Calu3 (cell line): ENCODE measurements at regions of chr3 and their contacts with region 1.

Region 1: GRCh38 chr3:189947948-189948723 is 172.6 kb downstream of the P3H2 start:
- DNase-seq: peak; percentile 63
- H3K4me3 Mint-ChIP-seq: no peak overlapping the region
- H3K27ac Mint-ChIP-seq: peak overlapping the region; percentile 23
- H3K4me1 Mint-ChIP-seq: peaks cover 53% of the 10 kb centered on the region
- H3K27me3 Mint-ChIP-seq: no peaks in the 10 kb centered on the region
- CTCF ChIP-seq: peak; percentile 71

Region 2: DNA sequence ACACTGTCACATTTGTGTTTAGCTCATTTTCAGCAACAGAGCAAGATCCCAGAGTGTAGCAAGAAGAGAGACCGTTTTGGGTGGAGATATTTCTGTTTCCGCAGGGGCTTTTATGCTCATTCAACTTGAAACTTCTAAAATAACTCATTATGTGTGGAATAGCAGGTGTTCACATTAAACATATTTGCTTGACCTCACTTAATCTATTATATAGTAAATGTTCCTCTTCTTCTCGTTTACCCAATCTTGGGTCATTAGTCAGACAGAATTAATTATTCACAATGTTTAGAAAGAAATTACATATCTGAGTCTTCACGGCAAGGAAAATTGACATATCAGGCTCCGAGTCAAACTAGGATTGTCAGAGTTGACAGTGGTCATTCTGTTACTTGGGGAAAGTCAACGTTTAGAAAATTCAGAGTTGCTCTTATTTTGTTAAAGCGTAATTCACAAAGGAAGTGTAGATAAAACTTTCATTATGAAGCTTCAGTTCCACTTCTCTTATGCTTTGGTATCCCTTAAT is 553.5 kb before region 1 on chr3:
- CTCF ChIA-PET with region 1: no interaction called
- intact Hi-C with region 1: loop called (anchors 2 kb)
- DNase-seq: no peak
- H3K4me3 Mint-ChIP-seq: no peak overlapping the region
- H3K27ac Mint-ChIP-seq: peak overlapping the region; percentile 47
- H3K4me1 Mint-ChIP-seq: peaks cover 52% of the 10 kb centered on the region
- H3K27me3 Mint-ChIP-seq: no peaks in the 10 kb centered on the region
- CTCF ChIP-seq: no peak

Region 3: GRCh38 chr3:189512039-189512438 is 436.1 kb before region 1 on chr3:
- CTCF ChIA-PET with region 1: interaction called, 6 read pairs
- intact Hi-C with region 1: loop called (anchors 2 kb)
- DNase-seq: no peak
- H3K4me3 Mint-ChIP-seq: no peak overlapping the region
- H3K27ac Mint-ChIP-seq: peak overlapping the region; percentile 62
- H3K4me1 Mint-ChIP-seq: peaks cover 25% of the 10 kb centered on the region
- H3K27me3 Mint-ChIP-seq: no peaks in the 10 kb centered on the region
- CTCF ChIP-seq: no peak

Region 4: GRCh38 chr3:189570916-189571315 is 377.2 kb before region 1 on chr3:
- CTCF ChIA-PET with region 1: interaction called, 3 read pairs
- intact Hi-C with region 1: loop called (anchors 10 kb)
- DNase-seq: no peak
- H3K4me3 Mint-ChIP-seq: no peak overlapping the region
- H3K27ac Mint-ChIP-seq: no peak overlapping the region
- H3K4me1 Mint-ChIP-seq: peaks cover 15% of the 10 kb centered on the region
- H3K27me3 Mint-ChIP-seq: no peaks in the 10 kb centered on the region
- CTCF ChIP-seq: no peak

Region 5: DNA sequence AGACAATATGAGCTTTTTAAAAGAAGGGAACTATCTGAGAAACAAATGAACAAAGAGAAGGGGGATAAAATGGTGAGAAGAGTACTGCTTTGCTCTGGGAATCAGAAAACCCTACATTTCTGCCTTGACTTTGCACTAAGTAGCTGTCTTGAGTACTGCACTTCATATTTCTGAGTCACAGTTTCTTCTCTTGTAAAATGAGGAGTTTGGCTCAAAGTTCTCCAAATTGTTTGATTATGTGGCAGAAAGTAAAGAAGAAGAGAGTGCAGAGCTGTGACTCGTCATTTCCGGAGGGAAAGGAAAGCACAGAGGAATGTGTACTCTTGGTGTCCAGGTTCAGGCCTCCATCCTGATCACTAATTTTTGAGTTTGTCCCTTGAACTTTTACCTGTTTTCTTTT is 262.3 kb before region 1 on chr3:
- CTCF ChIA-PET with region 1: interaction called, 10 read pairs
- intact Hi-C with region 1: loop called (anchors 2 kb)
- DNase-seq: no peak
- H3K4me3 Mint-ChIP-seq: no peak overlapping the region
- H3K27ac Mint-ChIP-seq: no peak overlapping the region
- H3K4me1 Mint-ChIP-seq: no peaks in the 10 kb centered on the region
- H3K27me3 Mint-ChIP-seq: no peaks in the 10 kb centered on the region
- CTCF ChIP-seq: no peak

Region 6: DNA sequence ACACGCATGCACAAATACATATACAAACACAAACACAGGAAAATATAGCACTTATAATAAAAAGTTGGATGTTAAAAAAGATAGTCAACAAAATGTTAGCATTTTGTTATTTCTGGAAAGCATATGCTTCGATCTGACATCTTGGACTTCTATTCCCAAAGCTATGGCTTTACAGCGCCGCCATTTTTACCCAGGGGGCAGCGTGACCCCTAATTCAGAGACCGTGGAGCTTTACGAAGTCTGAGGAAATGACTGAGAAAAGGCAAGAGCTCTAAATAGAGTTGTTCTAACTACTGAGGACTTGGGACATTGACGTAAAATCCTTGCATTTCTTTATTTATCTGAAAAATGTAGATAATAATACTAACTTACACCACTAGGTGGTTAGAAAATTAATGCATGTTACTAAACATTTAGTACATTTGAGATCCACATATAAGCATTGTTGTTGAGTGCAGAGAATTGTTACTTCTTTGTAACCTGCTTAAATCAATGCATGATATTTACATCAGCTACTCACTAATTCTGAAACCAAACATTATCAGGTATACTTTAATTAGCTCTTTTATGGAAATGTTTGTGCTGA is 161.6 kb before region 1 on chr3:
- CTCF ChIA-PET with region 1: interaction called, 9 read pairs
- intact Hi-C with region 1: loop called (anchors 2 kb)
- DNase-seq: no peak
- H3K4me3 Mint-ChIP-seq: no peak overlapping the region
- H3K27ac Mint-ChIP-seq: no peak overlapping the region
- H3K4me1 Mint-ChIP-seq: peaks cover 24% of the 10 kb centered on the region
- H3K27me3 Mint-ChIP-seq: no peaks in the 10 kb centered on the region
- CTCF ChIP-seq: peak; percentile 47

Region 7: GRCh38 chr3:189841473-189842210 is 106.5 kb before region 1 on chr3:
- CTCF ChIA-PET with region 1: interaction called, 7 read pairs
- intact Hi-C with region 1: loop called (anchors 1 kb)
- DNase-seq: peak; percentile 68
- H3K4me3 Mint-ChIP-seq: peak overlapping the region; percentile 18
- H3K27ac Mint-ChIP-seq: peak overlapping the region; percentile 92
- H3K4me1 Mint-ChIP-seq: peaks cover 37% of the 10 kb centered on the region
- H3K27me3 Mint-ChIP-seq: no peaks in the 10 kb centered on the region
- CTCF ChIP-seq: no peak

Region 8: GRCh38 chr3:190073264-190074008 is 125.3 kb after region 1 on chr3:
- CTCF ChIA-PET with region 1: no interaction called
- intact Hi-C with region 1: no loop called
- DNase-seq: no peak
- H3K4me3 Mint-ChIP-seq: no peak overlapping the region
- H3K27ac Mint-ChIP-seq: no peak overlapping the region
- H3K4me1 Mint-ChIP-seq: peaks cover 20% of the 10 kb centered on the region
- H3K27me3 Mint-ChIP-seq: no peaks in the 10 kb centered on the region
- CTCF ChIP-seq: no peak

Region 9: GRCh38 chr3:190092250-190092649 is 144.1 kb after region 1 on chr3:
- CTCF ChIA-PET with region 1: no interaction called
- intact Hi-C with region 1: no loop called
- DNase-seq: no peak
- H3K4me3 Mint-ChIP-seq: no peak overlapping the region
- H3K27ac Mint-ChIP-seq: no peak overlapping the region
- H3K4me1 Mint-ChIP-seq: no peaks in the 10 kb centered on the region
- H3K27me3 Mint-ChIP-seq: no peaks in the 10 kb centered on the region
- CTCF ChIP-seq: no peak